ENCODE measurements at regions of chr6 and their contacts with region 1.

Region 1: DNA sequence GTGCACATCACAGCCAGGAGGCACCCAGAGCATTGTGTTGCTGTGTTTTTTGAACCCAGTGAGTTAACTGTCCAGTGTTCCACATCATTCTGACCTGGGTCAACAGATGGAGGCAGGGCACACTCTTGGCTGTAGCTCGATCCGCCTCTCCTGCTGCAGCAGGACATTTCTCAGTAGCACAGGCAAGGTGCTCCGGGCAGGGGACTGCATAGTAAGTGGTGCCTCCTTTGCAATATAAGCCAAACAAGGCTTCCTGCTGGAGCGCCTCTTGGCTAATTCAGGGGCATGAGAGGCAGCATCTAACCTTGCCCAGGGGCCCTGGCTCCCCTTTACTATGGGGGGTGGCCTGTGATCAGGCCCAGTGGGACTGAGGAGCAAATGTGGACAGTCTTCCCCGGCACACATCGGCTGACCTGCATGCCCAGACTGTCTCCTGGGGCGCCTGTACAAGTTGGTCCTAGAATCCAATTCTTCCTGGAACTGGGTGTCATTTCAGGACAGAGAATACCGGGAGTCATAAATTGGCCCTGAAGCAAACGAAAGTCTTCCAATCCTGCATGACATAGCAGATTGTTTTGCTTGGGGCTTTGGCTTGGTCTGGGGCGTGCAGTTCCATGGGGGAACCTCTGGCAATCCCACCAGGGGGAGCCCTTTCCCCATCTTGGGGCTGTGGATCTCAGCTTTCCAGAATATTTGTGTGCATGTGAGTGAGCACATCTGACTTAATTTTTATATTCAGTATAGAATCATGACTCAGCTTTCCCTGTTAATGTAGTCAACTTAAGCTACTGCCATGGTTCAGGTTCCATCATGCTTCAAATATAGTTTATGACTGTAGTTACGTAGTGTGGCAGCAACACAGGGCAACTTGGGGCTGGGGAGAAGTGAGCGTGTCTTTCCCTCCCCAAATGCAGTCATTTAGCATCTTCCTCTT is 56.0 kb upstream of the DDR1 start:
- DNase-seq: peak; percentile 92
- H3K4me3 ChIP-seq: no peak overlapping the region
- H3K27ac ChIP-seq: no peak overlapping the region
- H3K4me1 ChIP-seq: peaks cover 15% of the 10 kb centered on the region
- H3K27me3 ChIP-seq: no peaks in the 10 kb centered on the region
- CTCF ChIP-seq: peak; percentile 89
- POLR2A ChIP-seq: no peak

Region 2: DNA sequence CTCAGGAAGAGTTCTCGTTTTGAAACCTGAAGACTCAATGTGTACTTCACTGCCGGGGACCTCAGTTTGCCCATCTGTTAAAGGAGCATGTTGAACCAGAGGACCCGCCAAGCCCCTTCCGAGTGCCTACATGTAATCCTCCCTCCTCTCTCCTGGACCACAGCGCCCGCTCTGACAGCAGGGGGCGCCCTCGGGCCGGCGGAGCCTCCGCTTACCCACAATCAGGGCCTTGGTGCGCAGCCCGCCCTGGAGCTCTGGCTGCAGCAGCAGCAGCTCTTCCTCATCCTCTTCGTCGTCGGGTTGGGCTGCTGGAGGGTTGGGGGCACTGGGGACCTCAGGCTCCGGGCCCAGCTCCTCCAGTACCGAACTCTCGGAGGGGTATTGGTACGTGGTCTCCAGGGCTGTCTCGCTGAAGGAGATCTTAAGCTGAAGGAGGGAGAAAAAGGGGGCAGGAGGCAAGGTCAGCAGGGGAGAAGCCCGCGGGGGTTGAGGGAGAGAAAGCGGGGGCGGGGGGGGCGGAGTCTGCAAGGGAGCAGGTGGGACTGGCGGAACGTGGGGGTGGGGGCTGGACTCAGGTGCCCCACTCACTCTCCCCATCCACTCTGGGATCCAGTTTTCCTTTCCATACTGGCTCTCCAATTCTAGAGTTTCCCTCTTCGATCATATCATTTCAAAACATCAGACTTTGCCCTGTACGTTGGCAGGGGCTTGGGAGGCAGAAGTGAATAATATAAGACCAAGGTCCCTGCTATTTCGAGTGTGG is 149.1 kb before region 1 on chr6:
- CTCF ChIA-PET with region 1: interaction called, 3 read pairs
- POLR2A ChIA-PET with region 1: no interaction called
- dilution Hi-C with region 1: no loop called
- intact Hi-C with region 1: loop called (anchors 1 kb)
- DNase-seq: peak; percentile 85
- H3K4me3 ChIP-seq: peak overlapping the region in 2 of 3 experiments; percentile 8 to 27
- H3K27ac ChIP-seq: peak overlapping the region; percentile 2
- H3K4me1 ChIP-seq: peaks cover 31% of the 10 kb centered on the region
- H3K27me3 ChIP-seq: no peaks in the 10 kb centered on the region
- CTCF ChIP-seq: peak; percentile 95 to 96
- POLR2A ChIP-seq: no peak

Region 3: DNA sequence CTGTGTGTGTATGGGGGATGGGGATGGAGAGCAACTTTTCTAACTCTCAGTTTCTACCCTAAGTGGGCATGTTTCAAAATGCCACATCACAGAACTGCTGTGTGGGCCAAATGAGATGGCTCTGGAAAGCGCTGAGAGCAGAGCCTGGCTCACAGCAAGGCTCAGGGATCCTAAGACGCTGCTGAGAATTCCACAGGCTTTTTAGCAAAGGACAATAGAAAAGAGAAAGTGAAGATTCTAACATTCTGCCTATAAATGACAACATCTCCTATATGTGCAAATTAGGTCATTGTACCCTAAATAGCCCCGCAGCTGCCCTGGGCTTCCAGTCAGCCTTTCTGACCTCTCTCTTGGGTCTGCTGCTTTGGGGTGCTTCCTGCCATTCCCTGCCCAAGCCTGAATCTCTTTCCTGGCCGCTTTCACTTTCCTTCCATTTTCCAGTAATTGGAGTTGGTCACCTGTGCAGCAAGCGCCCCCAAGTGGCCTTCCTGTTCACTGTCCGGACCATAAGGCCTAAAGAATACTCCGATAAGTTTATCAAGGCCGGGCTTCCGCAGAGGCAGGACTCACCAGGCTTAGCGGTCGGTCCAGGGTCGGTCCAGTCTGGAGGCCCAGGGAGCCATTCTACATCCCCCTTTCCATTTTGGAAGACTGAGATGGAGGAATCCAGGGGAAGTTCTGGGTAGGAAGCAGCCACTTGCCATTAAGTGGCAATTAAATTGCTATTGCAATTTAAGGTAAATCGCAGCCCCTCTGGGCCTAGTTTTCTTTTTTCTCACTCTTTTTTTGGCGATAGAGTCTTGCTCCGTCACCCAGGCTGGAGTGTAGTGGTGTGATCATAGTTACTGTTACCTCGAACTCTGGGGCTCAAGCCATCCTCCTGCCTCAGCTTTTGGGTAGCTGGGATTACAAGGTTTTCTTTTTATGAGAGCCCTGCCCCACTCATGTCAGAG is 49.4 kb after region 1 on chr6:
- CTCF ChIA-PET with region 1: interaction called, 57 read pairs
- POLR2A ChIA-PET with region 1: no interaction called
- dilution Hi-C with region 1: no loop called
- intact Hi-C with region 1: loop called (anchors 1 kb)
- DNase-seq: peak; percentile 92
- H3K4me3 ChIP-seq: peak overlapping the region in 2 of 3 experiments; percentile 9 to 31
- H3K27ac ChIP-seq: peak overlapping the region; percentile 81
- H3K4me1 ChIP-seq: peaks cover 23% of the 10 kb centered on the region
- H3K27me3 ChIP-seq: peaks cover 0 to 2% of the 10 kb centered on the region in 2 experiments
- CTCF ChIP-seq: peak; percentile 83 to 90
- POLR2A ChIP-seq: peak; percentile 49

Region 4: DNA sequence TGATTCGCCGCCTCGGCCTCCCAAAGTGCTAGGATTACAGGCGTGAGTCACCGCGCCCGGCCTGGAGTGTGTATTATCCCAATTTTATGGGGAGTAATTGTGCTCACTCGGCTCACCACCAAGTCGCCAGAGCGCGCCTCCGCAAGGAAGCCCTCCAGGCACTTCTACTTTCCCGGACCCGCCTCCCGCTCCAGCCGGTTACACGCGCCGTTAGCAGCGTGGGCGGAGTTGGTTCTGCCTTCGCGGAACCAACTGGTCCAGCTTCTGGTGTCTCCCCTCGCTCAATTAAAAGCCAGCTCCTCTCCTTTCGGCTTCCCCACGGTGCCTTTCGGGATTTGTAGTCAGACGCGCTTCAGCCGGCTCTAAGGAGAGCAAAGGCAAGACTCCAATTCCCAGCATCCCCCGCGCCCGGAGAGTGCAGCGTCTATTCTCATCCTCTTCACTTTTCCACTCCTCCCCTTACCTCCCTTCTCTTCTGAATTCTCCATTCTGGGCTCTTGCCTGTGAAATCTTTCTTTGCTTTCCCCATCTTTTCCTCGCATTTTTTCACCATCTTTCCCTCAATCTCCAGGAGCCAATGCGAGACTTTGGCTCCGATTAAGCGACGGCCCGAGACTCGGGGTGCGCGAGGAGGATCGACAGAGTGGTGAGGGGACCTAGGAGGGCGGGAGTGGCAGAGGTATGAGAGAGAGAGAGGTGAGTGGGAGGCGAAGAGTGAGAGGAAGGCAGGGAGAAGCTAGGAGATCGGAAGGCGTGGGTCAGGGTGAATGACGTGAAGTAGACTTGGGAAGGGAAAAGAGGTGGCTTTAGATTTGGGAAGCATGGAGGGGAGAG is 79.7 kb after region 1 on chr6 and contains the start of gene GTF2H4:
- CTCF ChIA-PET with region 1: interaction called, 72 read pairs
- POLR2A ChIA-PET with region 1: interaction called, 3 read pairs
- dilution Hi-C with region 1: no loop called
- intact Hi-C with region 1: no loop called
- DNase-seq: peak; percentile 99
- H3K4me3 ChIP-seq: peak within 1 kb of the TSS; percentile 94 to 96 (median 94)
- H3K27ac ChIP-seq: peak within 1 kb of the TSS; percentile 7
- H3K4me1 ChIP-seq: peaks cover 9% of the 10 kb centered on the region
- H3K27me3 ChIP-seq: no peaks in the 10 kb centered on the region
- CTCF ChIP-seq: no peak
- POLR2A ChIP-seq: no peak
- total RNA-seq, gene GTF2H4: 51.0 and 52.6 TPM in 2 replicates

Region 5: GRCh38 chr6:31068669-31069340 is 240.5 kb after region 1 on chr6:
- CTCF ChIA-PET with region 1: interaction called, 35 read pairs
- POLR2A ChIA-PET with region 1: no interaction called
- dilution Hi-C with region 1: no loop called
- intact Hi-C with region 1: no loop called
- DNase-seq: peak; percentile 73
- H3K4me3 ChIP-seq: no peak overlapping the region
- H3K27ac ChIP-seq: no peak overlapping the region
- H3K4me1 ChIP-seq: peaks cover 6% of the 10 kb centered on the region
- H3K27me3 ChIP-seq: peaks cover 5 to 8% of the 10 kb centered on the region in 2 experiments
- CTCF ChIP-seq: peak; percentile 82 to 91
- POLR2A ChIP-seq: no peak

Region 6: DNA sequence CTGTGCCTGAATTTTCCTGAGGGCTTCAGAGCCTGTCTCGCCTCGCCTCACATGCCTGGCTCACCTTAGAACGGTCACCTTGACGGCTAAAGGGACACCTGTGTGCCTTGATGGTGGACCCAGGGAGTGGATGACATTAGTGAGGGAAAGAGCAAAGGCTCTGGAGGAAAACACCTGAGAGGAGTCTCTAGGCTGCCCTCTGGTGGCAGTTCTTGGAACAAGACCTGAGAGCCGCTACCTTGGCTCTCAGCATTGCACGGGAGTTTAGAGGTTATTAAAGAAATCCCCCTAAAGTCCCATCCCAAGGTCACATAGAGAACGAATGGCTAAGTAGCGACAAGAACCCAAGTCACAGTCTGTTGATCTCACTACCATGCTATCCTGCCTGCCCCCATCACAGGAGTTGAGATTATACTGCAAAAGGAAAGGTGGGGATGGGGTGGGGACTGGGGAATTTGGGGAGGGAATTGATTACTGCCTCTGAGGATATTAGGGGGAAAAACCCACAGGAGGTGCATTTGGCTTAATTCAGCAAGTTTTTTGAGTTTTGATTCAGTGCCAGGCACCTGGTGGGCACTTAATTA is 299.9 kb after region 1 on chr6:
- CTCF ChIA-PET with region 1: interaction called, 11 read pairs
- POLR2A ChIA-PET with region 1: no interaction called
- dilution Hi-C with region 1: no loop called
- intact Hi-C with region 1: loop called (anchors 5 kb)
- DNase-seq: peak; percentile 47
- H3K4me3 ChIP-seq: no peak overlapping the region
- H3K27ac ChIP-seq: no peak overlapping the region
- H3K4me1 ChIP-seq: peaks cover 23% of the 10 kb centered on the region
- H3K27me3 ChIP-seq: peaks cover 3 to 6% of the 10 kb centered on the region in 2 experiments
- CTCF ChIP-seq: peak; percentile 80 to 89
- POLR2A ChIP-seq: no peak

Measured in endothelial cell of umbilical vein (primary cell).